Heart left ventricle (tissue), 16 donors: ENCODE measurements at regions of chr3 and their contacts with region 1.

Region 1: GRCh38 chr3:119498186-119498987 is at the start of gene TIMMDC1:
- DNase-seq: peak; percentile 98
- ATAC-seq: peak; percentile 99 to 100 (median 99)
- H3K4me3 ChIP-seq: peak within 1 kb of the TSS; percentile 47 to 93 (median 74)
- H3K27ac ChIP-seq: peak within 1 kb of the TSS; percentile 89 to 98 (median 95)
- H3K4me1 ChIP-seq: peaks cover 9 to 38% (median 27%) of the 10 kb centered on the region in 12 donors
- H3K27me3 ChIP-seq: no peaks in the 10 kb centered on the region
- CTCF ChIP-seq: no peak
- POLR2A ChIP-seq: peak; percentile 81 to 87
- total RNA-seq, gene TIMMDC1: 78.6 to 297 (median 224) TPM

Region 2: GRCh38 chr3:119463171-119464169 is 34.9 kb before region 1 on chr3 and contains the start of gene TMEM39A:
- intact Hi-C with region 1: loop called in 4 of 10 experiments (anchors 1 to 5 kb)
- DNase-seq: peak; percentile 100
- ATAC-seq: peak; percentile 96 to 99 (median 97)
- H3K4me3 ChIP-seq: peak within 1 kb of the TSS; percentile 62 to 100 (median 88)
- H3K27ac ChIP-seq: peak within 1 kb of the TSS; percentile 76 to 95 (median 84)
- H3K4me1 ChIP-seq: peaks cover 0 to 56% (median 19%) of the 10 kb centered on the region in 12 donors
- H3K27me3 ChIP-seq: no peaks in the 10 kb centered on the region
- CTCF ChIP-seq: peak in 4 of 12 donors; percentile 14 to 37 (median 25)
- POLR2A ChIP-seq: peak; percentile 43 to 94
- total RNA-seq, gene TMEM39A: 8.7 to 21.0 (median 15.6) TPM

Region 3: GRCh38 chr3:119469381-119470189 is 28.8 kb before region 1 on chr3:
- intact Hi-C with region 1: loop called in 3 of 10 experiments (anchors 1 to 5 kb)
- DNase-seq: peak in 1 of 5 donors; percentile 49
- ATAC-seq: peak in 1 of 4 donors; percentile 13
- H3K4me3 ChIP-seq: peak overlapping the region; percentile 53 to 96 (median 84)
- H3K27ac ChIP-seq: peak overlapping the region in 11 of 12 donors; percentile 66 to 97 (median 84)
- H3K4me1 ChIP-seq: peaks cover 0 to 19% (median 10%) of the 10 kb centered on the region in 12 donors
- H3K27me3 ChIP-seq: no peaks in the 10 kb centered on the region
- CTCF ChIP-seq: no peak
- POLR2A ChIP-seq: no peak

Region 4: GRCh38 chr3:119559441-119559963 is 61.1 kb after region 1 on chr3 and contains the start of gene CD80:
- intact Hi-C with region 1: no loop called
- DNase-seq: peak; percentile 44 to 70 (median 46)
- ATAC-seq: peak in 3 of 4 donors; percentile 68 to 74 (median 73)
- H3K4me3 ChIP-seq: peak within 1 kb of the TSS in 1 of 12 donors; percentile 45
- H3K27ac ChIP-seq: peak within 1 kb of the TSS in 1 of 12 donors; percentile 88
- H3K4me1 ChIP-seq: peaks cover 0 to 45% (median 6%) of the 10 kb centered on the region in 12 donors
- H3K27me3 ChIP-seq: no peaks in the 10 kb centered on the region
- CTCF ChIP-seq: peak in 5 of 12 donors; percentile 16 to 42 (median 26)
- POLR2A ChIP-seq: no peak
- total RNA-seq, gene CD80: 0.22 to 4.4 (median 0.39) TPM in 6 of 9 donors, not detected in the others